H1 (cell line): ENCODE measurements at regions of chr19 and their contacts with region 1.

Region 1: GRCh38 chr19:39177110-39177699 is 19.6 kb upstream of the NCCRP1 start:
- DNase-seq: no peak
- H3K4me3 ChIP-seq: no peak overlapping the region
- H3K27ac ChIP-seq: no peak overlapping the region
- H3K4me1 ChIP-seq: no peaks in the 10 kb centered on the region
- H3K27me3 ChIP-seq: no peaks in the 10 kb centered on the region
- CTCF ChIP-seq: no peak
- EP300 ChIP-seq: no peak
- POLR2A ChIP-seq: no peak
- RAD21 ChIP-seq: no peak

Region 2: DNA sequence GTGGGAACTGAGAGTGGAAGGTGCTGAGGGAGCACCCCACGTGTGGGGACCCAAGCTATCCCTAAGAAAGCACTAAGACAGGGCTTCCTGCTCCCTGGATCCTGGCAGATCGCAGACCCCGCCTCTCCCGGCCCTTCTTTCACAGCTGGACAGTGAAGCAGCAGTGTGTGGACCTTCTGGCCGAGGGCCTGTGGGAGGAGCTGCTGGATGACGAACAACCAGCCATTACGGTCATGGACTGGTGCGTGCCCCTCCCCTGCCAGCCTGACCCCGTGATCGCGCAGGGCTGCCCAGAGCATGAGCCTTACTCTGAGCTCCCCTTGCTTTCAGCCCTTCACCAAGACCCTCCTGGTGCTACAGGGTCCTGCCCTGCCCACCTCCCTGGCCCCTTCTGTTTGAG is 21.8 kb after region 1 on chr19:
- CTCF ChIA-PET with region 1: interaction called, 10 read pairs
- POLR2A ChIA-PET with region 1: no interaction called
- DNase-seq: no peak
- H3K4me3 ChIP-seq: no peak overlapping the region
- H3K27ac ChIP-seq: no peak overlapping the region
- H3K4me1 ChIP-seq: peaks cover 0 to 9% (median 6%) of the 10 kb centered on the region in 4 experiments; a peak in 5 of 7 replicates
- H3K27me3 ChIP-seq: peaks cover 13 to 33% (median 33%) of the 10 kb centered on the region in 4 experiments
- CTCF ChIP-seq: no peak
- EP300 ChIP-seq: no peak
- POLR2A ChIP-seq: no peak
- RAD21 ChIP-seq: no peak

Region 3: GRCh38 chr19:39246951-39247669 is 69.9 kb after region 1 on chr19:
- CTCF ChIA-PET with region 1: no interaction called
- POLR2A ChIA-PET with region 1: no interaction called
- DNase-seq: peak in 1 of 2 experiments; percentile 85
- H3K4me3 ChIP-seq: peak overlapping the region in 2 of 4 experiments; percentile 29 to 51; a peak in 3 of 8 replicates
- H3K27ac ChIP-seq: no peak overlapping the region
- H3K4me1 ChIP-seq: peaks cover 0 to 14% (median 7%) of the 10 kb centered on the region in 4 experiments; a peak in 5 of 7 replicates
- H3K27me3 ChIP-seq: peaks cover 29 to 43% (median 36%) of the 10 kb centered on the region in 4 experiments
- CTCF ChIP-seq: no peak
- EP300 ChIP-seq: no peak
- POLR2A ChIP-seq: no peak
- RAD21 ChIP-seq: no peak